IMR-90 (cell line): ENCODE measurements at regions of chr2 and their contacts with region 1.

Region 1: DNA sequence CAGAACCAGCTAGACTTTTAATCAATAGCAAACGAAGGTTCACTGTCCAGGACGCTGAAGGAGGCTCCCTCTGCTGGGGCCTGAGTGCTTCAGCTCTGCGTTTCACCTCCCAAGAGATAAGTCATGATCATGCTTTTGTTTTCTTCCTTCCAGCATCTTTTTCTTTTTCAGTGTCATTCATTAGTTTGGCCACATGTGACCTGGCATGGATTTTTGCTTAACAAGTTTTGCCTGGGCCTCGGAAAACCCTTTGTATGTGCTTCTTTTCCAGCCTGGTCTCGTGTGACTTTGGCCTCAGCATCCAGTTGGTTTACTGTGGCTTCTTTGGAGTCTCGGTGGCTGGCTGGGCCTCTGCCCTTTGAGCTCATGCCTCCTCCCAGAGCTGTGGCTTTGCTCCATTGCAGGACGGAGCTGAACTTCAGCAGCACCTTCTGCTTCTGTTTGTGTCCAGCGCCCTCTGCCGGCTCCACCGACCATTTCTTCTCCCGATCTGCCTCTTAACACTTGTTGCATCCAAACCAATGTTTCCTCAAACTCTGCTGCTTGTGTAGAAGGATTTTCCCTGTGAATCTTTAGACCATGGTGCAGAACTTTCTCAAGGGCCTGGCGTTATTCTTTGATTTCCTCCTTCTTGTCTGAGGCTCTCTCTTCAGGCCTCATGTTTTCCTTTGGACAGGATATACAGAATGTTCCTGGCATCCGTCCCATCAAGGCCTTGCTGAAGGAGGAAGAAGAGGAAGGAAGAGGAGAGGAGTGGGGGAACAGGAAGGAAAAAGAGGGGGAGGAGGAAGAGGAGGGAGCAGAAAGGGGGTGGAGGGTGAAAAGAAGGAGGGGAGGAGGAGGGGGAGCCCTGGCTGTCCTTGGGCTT is 23.6 kb upstream of the HES6 start:
- DNase-seq: peak; percentile 92
- ATAC-seq: peak; percentile 95
- H3K4me3 ChIP-seq: no peak overlapping the region
- H3K27ac ChIP-seq: no peak overlapping the region
- H3K4me1 ChIP-seq: peaks cover 7% of the 10 kb centered on the region; the same call in 1 of the 2 replicates
- H3K27me3 ChIP-seq: no peaks in the 10 kb centered on the region
- CTCF ChIP-seq: peak; percentile 92
- POLR2A ChIP-seq: peak; percentile 43; the same call in 1 of the 2 replicates
- RAD21 ChIP-seq: peak; percentile 87

Region 2: GRCh38 chr2:237791977-237792727 is 471.3 kb before region 1 on chr2:
- CTCF ChIA-PET with region 1: no interaction called
- POLR2A ChIA-PET with region 1: interaction called, 15 read pairs
- dilution Hi-C with region 1: no loop called
- in situ Hi-C with region 1: no loop called
- intact Hi-C with region 1: no loop called
- DNase-seq: peak; percentile 5
- ATAC-seq: peak; percentile 50; the same call in 1 of the 2 replicates
- H3K4me3 ChIP-seq: no peak overlapping the region
- H3K27ac ChIP-seq: no peak overlapping the region
- H3K4me1 ChIP-seq: peaks cover 2% of the 10 kb centered on the region; the same call in 1 of the 2 replicates
- H3K27me3 ChIP-seq: no peaks in the 10 kb centered on the region
- CTCF ChIP-seq: 0 out of 2 replicates have a peak, but pooled peaks have one; percentile 19
- POLR2A ChIP-seq: no peak
- RAD21 ChIP-seq: no peak

Region 3: GRCh38 chr2:237923481-237924163 is 339.8 kb before region 1 on chr2:
- CTCF ChIA-PET with region 1: interaction called, 3 read pairs
- POLR2A ChIA-PET with region 1: no interaction called
- dilution Hi-C with region 1: no loop called
- in situ Hi-C with region 1: no loop called
- intact Hi-C with region 1: loop called (anchors 1 kb)
- DNase-seq: peak; percentile 35
- ATAC-seq: peak; percentile 98
- H3K4me3 ChIP-seq: no peak overlapping the region
- H3K27ac ChIP-seq: no peak overlapping the region
- H3K4me1 ChIP-seq: peaks cover 2% of the 10 kb centered on the region; the same call in 1 of the 2 replicates
- H3K27me3 ChIP-seq: peaks cover 3% of the 10 kb centered on the region
- CTCF ChIP-seq: peak; percentile 71
- POLR2A ChIP-seq: no peak
- RAD21 ChIP-seq: peak; percentile 73

Region 4: GRCh38 chr2:238060542-238061314 is 202.7 kb before region 1 on chr2 and contains the start of gene SCLY:
- CTCF ChIA-PET with region 1: interaction called, 5 read pairs
- POLR2A ChIA-PET with region 1: no interaction called
- dilution Hi-C with region 1: no loop called
- in situ Hi-C with region 1: no loop called
- intact Hi-C with region 1: loop called (anchors 2 kb)
- DNase-seq: peak; percentile 96
- ATAC-seq: peak; percentile 98
- H3K4me3 ChIP-seq: peak within 1 kb of the TSS; percentile 83
- H3K27ac ChIP-seq: peak within 1 kb of the TSS; percentile 65
- H3K4me1 ChIP-seq: no peaks in the 10 kb centered on the region; the same call in 1 of the 2 replicates
- H3K27me3 ChIP-seq: no peaks in the 10 kb centered on the region
- CTCF ChIP-seq: no peak
- POLR2A ChIP-seq: peak; percentile 85
- RAD21 ChIP-seq: peak; percentile 18; the same call in 1 of the 2 replicates
- total RNA-seq, gene SCLY: 8.6 and 12.2 TPM in 2 replicates

Region 5: GRCh38 chr2:238160206-238161109 is 103.0 kb before region 1 on chr2:
- CTCF ChIA-PET with region 1: no interaction called
- POLR2A ChIA-PET with region 1: no interaction called
- dilution Hi-C with region 1: no loop called
- in situ Hi-C with region 1: no loop called
- intact Hi-C with region 1: loop called (anchors 1 kb)
- DNase-seq: peak; percentile 59
- ATAC-seq: no peak
- H3K4me3 ChIP-seq: no peak overlapping the region
- H3K27ac ChIP-seq: no peak overlapping the region
- H3K4me1 ChIP-seq: peaks cover 16% of the 10 kb centered on the region
- H3K27me3 ChIP-seq: peaks cover 2% of the 10 kb centered on the region; the same call in 1 of the 2 replicates
- CTCF ChIP-seq: peak; percentile 22; the same call in 1 of the 2 replicates
- POLR2A ChIP-seq: no peak
- RAD21 ChIP-seq: peak; percentile 20